GM13976 (cell line): ENCODE measurements at regions of chr12 and their contacts with region 1.

Region 1: DNA sequence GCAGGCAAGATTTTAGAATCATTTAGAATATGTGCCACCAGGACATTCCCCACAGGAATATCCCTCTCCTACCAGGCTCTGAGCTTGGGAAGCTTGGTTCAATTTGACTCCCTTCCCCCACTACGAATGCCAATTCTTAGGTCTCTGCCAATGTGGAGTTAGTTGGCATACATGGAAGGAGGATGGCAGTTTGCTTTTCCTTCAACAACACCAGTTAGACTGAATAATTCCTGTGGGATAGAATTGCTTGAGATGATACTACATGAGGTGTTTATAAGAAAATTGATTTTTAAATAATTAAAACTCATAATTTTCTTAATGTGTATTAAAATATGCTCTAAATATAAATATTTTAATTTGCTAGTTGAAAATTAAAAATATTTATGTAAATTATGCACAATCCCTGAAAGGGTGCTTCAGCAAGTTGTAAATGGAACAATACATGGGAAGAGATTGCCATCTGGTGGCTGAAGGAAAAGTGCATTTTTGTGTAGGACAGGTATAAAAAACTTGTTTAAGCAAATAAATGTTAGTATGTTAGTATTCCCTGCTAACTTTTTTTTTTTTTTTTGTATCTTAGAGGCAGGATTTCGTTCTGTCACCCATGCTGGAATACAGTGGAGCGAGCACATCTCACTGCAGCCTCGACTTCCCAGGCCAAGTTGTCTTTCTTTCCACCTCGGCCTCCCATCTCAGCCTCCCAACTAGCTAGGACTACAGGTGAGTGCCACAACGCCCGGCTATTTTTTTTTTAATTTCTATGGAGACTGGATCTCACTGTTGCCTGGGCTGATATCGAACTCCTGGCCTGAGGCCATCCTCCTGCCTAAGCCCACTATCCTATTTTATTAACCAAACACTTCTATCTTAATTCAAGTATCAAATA is 25.8 kb upstream of the STRAP start:
- DNase-seq: peak; percentile 13
- CTCF ChIP-seq: peak; percentile 60

Region 2: DNA sequence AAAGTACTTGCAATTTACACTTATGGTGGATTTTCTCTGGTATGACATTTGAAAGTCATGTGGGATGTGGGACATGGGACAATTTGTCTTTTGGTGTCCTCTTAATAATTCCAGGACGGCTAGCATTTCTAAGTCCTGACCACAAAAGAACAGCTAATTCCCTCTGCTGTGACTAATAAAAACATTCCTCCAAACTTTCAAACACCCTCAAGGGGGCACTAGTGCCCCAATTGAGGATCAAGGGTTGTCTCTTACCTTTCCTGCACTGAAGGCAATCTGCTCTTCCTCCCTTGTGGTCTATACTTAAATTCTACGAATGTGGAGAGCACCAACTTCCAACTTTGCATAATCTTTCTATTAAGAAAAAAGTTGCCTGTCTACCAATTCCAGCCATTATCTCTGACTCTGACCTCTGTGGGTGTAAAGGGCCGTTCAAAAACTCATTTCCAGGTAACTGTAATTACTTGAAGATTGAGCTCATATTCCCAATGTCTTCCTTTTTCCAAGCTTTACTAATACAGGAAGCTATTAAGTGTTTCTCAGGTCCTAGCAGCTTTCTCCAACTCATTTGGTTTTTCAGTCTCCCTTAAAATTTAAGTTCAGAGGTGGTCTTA is 323.9 kb before region 1 on chr12:
- in situ Hi-C with region 1: loop called (anchors 10 kb)
- DNase-seq: peak; percentile 49
- CTCF ChIP-seq: peak; percentile 53

Region 3: DNA sequence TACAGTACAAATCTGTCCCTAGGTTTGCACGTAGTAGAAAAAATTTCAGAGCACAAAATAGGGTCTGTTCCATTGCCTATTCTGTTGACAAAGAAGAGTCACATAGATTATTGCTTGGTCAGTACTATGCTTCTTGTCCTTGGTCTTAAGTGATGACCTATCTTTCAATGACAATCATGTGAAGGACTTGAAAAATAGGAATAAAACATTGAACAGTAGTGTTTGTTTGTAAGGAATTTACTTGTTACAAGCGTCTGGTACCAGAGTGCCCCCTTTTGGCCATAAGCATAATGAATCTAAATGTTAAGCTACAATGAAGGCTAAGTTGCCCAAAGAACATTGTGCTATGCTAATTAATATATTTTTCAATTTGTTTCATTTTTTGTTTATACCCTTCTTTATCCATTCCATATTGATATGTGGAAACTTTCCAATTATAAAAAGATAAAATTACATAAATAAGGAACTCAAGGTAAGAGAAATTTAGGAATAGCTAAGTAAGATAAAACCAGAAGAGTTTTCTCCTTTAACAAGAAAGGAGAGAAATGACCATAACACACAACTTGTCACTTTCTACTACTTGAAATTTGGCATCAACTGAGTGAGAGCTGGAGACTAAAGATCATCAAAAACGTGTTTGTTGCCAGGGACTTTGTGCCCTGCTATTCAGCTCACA is 271.8 kb before region 1 on chr12:
- in situ Hi-C with region 1: loop called (anchors 5 kb)
- DNase-seq: peak; percentile 26
- CTCF ChIP-seq: peak; percentile 59

Region 4: GRCh38 chr12:15688202-15688736 is 168.1 kb before region 1 on chr12:
- in situ Hi-C with region 1: no loop called
- DNase-seq: no peak
- CTCF ChIP-seq: no peak

Region 5: GRCh38 chr12:16012117-16012516 is 155.8 kb after region 1 on chr12:
- in situ Hi-C with region 1: no loop called
- DNase-seq: no peak
- CTCF ChIP-seq: no peak